Endothelial cell of umbilical vein (primary cell): ENCODE measurements at regions of chr3 and their contacts with region 1.

Region 1: GRCh38 chr3:49906004-49906743 is 2.5 kb upstream of the MST1R start:
- DNase-seq: peak; percentile 64
- H3K4me3 ChIP-seq: peak overlapping the region in 1 of 3 experiments; percentile 41
- H3K27ac ChIP-seq: no peak overlapping the region
- H3K4me1 ChIP-seq: peaks cover 14% of the 10 kb centered on the region
- H3K27me3 ChIP-seq: no peaks in the 10 kb centered on the region
- CTCF ChIP-seq: peak; percentile 63 to 80
- POLR2A ChIP-seq: no peak

Region 2: GRCh38 chr3:49519296-49519695 is 386.9 kb before region 1 on chr3:
- CTCF ChIA-PET with region 1: no interaction called
- POLR2A ChIA-PET with region 1: no interaction called
- dilution Hi-C with region 1: no loop called
- intact Hi-C with region 1: no loop called
- DNase-seq: no peak
- H3K4me3 ChIP-seq: no peak overlapping the region
- H3K27ac ChIP-seq: no peak overlapping the region
- H3K4me1 ChIP-seq: no peaks in the 10 kb centered on the region
- H3K27me3 ChIP-seq: no peaks in the 10 kb centered on the region
- CTCF ChIP-seq: no peak
- POLR2A ChIP-seq: no peak

Region 3: DNA sequence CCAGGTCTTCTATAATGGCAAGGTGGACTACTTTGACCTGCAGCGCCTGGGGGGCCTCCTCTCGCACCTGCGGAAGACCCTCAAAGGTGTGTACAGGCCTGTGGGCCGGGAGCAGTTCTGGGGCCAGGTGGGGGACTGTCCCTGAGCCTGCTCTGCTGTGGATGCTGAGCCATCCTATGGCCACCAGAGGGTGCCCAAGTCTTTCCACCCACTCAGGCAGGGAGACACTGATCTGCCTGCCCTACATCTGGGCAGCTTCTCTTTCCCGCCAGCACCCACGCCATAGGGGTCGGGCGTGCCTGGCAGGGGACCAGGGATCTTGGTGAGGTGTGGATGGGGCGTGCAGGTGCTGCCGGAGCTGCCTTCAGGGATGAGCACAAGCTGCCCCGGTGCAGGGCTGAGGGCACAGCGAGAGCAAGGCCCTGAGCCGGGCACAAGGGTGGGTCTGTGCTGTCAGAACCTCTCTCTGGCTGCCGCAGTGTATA is 202.7 kb before region 1 on chr3:
- CTCF ChIA-PET with region 1: interaction called, 6 read pairs
- POLR2A ChIA-PET with region 1: no interaction called
- dilution Hi-C with region 1: no loop called
- intact Hi-C with region 1: loop called (anchors 1 kb)
- DNase-seq: peak; percentile 59
- H3K4me3 ChIP-seq: no peak overlapping the region
- H3K27ac ChIP-seq: no peak overlapping the region
- H3K4me1 ChIP-seq: peaks cover 5% of the 10 kb centered on the region
- H3K27me3 ChIP-seq: no peaks in the 10 kb centered on the region
- CTCF ChIP-seq: peak; percentile 75 to 96
- POLR2A ChIP-seq: no peak

Region 4: GRCh38 chr3:49725881-49726650 is 180.1 kb before region 1 on chr3:
- CTCF ChIA-PET with region 1: no interaction called
- POLR2A ChIA-PET with region 1: no interaction called
- dilution Hi-C with region 1: no loop called
- intact Hi-C with region 1: no loop called
- DNase-seq: no peak
- H3K4me3 ChIP-seq: no peak overlapping the region
- H3K27ac ChIP-seq: no peak overlapping the region
- H3K4me1 ChIP-seq: peaks cover 12% of the 10 kb centered on the region
- H3K27me3 ChIP-seq: no peaks in the 10 kb centered on the region
- CTCF ChIP-seq: no peak
- POLR2A ChIP-seq: no peak

Region 5: GRCh38 chr3:49856181-49857005 is 49.8 kb before region 1 on chr3 and contains the start of gene TRAIP:
- CTCF ChIA-PET with region 1: no interaction called
- POLR2A ChIA-PET with region 1: no interaction called
- dilution Hi-C with region 1: no loop called
- intact Hi-C with region 1: loop called (anchors 2 kb)
- DNase-seq: peak; percentile 97
- H3K4me3 ChIP-seq: peak within 1 kb of the TSS; percentile 41 to 64 (median 54)
- H3K27ac ChIP-seq: no peak within 1 kb of the TSS
- H3K4me1 ChIP-seq: peaks cover 12% of the 10 kb centered on the region
- H3K27me3 ChIP-seq: no peaks in the 10 kb centered on the region
- CTCF ChIP-seq: no peak
- POLR2A ChIP-seq: peak; percentile 72
- total RNA-seq, gene TRAIP: 11.5 and 13.4 TPM in 2 replicates